Activated CD4-positive, alpha-beta T cell treated with anti-CD3 and anti-CD28 coated beads, Interleukin-2, amount 10 ng/mL, durations not matched to agents 24 days and 14 days (primary cell): ENCODE measurements at regions of chrX and their contacts with region 1.

Region 1: DNA sequence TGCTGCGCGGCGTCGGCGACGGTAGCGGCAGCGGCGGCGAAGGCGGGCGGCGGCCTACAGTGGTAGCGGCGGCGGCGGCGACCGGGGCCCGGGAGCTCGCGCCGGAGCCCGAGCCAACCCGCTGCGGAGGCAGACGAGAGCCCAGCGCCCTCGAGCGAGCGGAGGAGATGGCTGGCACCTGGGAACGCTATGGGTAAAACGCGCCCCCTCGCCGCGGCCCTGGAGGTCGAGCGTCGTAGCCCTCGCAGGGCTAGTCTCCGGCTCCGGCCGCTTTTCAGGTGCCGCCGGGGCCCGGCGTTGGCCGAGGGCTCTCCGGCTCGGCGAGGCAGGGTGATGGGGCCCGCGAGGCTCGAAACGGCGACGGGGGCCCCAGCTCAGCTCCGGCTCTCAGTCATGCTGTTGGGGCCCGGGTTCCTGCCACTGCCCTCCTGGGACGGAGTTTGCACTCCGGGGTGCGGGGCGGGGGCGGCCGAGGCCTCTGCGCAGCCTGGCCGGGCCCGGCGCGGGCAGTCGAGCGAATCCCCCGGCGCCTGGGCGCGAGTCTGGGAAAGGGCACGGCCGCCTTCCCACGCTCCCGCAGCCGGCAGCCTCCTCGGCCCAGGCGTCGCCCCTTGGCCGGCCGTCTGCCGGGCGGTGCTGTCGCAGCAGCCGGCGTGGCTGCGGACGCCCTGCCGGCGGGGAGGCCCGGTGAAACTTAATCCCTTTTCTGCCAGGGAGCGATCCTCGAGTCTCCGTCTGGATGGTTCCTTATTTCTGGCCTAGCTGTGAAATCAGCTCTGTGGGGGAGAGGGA is 768 bp downstream of the MID2 start:
- DNase-seq: peak; percentile 69
- H3K4me3 Mint-ChIP-seq: peak overlapping the region; percentile 83
- H3K27ac Mint-ChIP-seq: peak overlapping the region; percentile 81
- H3K4me1 Mint-ChIP-seq: peaks cover 18% of the 10 kb centered on the region
- H3K27me3 Mint-ChIP-seq: peaks cover 10% of the 10 kb centered on the region

Region 2: DNA sequence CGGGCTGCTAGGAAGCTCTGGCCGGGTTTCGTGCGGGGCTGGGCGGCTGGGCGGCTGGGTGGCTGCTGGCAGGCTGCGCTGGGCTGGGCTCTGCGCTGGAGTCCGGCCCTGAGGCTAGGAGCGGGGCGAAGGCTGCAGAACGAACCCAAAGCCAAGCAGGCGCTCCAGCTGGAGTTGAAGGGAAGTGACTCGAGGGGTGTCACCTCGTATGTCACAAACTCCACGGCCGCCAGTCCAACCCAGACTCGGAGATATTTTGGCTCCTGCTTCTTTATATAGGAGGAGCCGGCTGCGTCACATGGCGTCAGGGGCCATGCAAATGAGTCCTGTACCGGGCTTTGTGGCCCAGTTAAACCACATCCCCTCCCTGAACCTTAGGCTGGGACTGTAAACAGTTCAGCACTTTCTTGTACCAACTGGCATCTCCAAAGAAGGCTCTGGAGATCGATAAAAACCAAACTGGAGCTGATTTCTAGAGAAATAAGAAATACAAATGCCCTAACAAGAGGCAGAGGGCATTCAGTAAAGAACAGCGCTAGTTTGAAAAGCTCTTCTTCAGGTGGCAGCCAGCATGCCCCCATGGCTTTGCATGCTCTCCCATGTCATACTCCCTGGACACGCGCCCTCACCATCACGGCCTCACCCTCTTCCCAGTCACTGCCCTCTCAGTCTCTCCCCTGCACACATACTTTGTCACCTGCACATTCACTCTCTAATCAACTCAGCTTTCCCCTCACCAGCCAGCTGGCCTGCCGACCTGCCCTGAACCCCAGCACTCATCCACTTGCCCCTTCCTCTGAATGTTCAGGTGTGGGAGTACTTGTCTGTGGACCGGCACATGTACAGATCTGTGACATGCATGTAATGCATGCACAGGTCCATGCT is 109.4 kb before region 1 on chrX:
- intact Hi-C with region 1: loop called (anchors 10 kb)
- DNase-seq: peak; percentile 96
- H3K4me3 Mint-ChIP-seq: peak overlapping the region; percentile 95
- H3K27ac Mint-ChIP-seq: peak overlapping the region; percentile 91
- H3K4me1 Mint-ChIP-seq: peaks cover 36% of the 10 kb centered on the region
- H3K27me3 Mint-ChIP-seq: no peaks in the 10 kb centered on the region

Region 3: GRCh38 chrX:107845625-107846024 is 19.2 kb after region 1 on chrX:
- intact Hi-C with region 1: loop called (anchors 2 kb)
- DNase-seq: no peak
- H3K4me3 Mint-ChIP-seq: no peak overlapping the region
- H3K27ac Mint-ChIP-seq: no peak overlapping the region
- H3K4me1 Mint-ChIP-seq: peaks cover 1% of the 10 kb centered on the region
- H3K27me3 Mint-ChIP-seq: no peaks in the 10 kb centered on the region

Region 4: DNA sequence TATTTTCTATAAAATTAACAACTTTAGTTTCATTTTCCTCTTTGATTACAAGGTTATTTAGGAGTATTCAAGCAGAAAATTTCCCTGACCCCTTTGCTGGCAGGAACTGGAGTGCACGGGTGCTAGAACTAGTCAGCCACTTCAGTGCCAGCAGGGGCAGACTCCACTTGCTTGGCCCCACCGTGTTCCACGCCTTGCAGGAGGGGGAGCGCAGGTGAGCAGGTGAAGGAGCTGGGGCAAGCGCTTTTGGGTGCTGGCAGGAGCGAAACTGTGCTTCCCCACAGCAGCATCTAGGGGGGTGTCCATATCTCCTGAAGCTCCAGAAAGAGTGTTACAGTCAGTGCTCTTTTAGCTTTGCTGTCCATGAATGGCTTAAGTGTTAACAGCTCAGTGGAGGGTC is 44.7 kb after region 1 on chrX:
- intact Hi-C with region 1: no loop called
- DNase-seq: no peak
- H3K4me3 Mint-ChIP-seq: no peak overlapping the region
- H3K27ac Mint-ChIP-seq: no peak overlapping the region
- H3K4me1 Mint-ChIP-seq: no peaks in the 10 kb centered on the region
- H3K27me3 Mint-ChIP-seq: no peaks in the 10 kb centered on the region